Mammary epithelial cell (primary cell): ENCODE measurements at regions of chr4 and their contacts with region 1.

Region 1: DNA sequence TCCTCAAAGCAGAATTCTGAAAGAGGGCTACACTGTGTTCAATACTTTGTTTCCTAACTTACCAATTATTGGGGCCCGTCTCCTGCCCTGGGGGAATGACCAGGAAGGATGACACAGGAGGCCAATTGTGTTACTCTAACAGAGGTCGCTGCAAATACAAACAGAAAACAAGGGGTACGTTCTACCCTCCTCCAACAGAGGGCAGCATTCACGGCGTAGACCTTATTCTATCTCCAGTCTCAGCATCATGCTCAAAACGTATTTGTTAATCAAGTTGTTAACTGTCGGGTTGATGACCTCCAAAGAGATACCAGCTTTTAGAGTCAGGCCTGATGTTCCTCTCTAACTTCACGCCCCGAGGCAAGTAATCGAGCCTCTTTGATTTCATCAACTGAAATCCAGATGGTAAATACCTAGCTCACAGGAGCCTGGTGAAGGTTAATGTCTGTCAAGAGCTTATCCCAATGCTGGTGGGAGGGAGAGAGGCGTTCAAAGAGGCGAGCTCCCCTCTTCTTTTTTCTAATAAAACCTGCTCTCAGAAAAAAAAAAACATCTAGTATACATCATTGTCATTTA is 181.0 kb upstream of the KCNIP4 start:
- DNase-seq: peak; percentile 41
- H3K4me3 ChIP-seq: no peak overlapping the region
- H3K27ac ChIP-seq: no peak overlapping the region
- H3K4me1 ChIP-seq: no peaks in the 10 kb centered on the region
- H3K27me3 ChIP-seq: no peaks in the 10 kb centered on the region
- CTCF ChIP-seq: peak; percentile 80 to 82

Region 2: DNA sequence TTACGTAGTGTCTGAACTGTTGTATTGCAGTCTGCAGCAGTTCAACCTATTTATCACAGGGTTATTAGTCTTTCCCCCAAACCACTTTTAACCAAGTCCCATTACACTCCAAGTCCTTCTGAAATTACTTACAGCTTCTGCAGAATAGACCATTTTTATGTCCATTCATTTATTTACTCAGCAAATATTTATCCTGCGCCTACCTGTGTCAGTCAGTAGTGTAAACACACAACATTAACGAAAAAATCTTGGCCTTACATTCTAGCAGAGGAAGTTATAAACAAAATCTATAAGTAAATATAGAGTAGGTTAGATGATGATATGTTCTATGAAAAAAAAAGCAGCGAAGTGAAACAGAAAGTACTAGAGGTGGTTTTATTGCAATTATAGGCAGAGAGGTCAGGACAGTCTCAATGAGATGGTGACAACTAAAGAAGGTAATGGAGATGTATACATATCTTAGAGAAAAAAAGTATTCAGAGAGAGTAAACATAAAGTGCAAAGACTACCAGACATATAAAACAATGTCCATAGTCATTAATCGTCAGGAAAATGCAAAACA is 715.7 kb before region 1 on chr4:
- CTCF ChIA-PET with region 1: no interaction called
- dilution Hi-C with region 1: no loop called
- in situ Hi-C with region 1: no loop called
- intact Hi-C with region 1: no loop called
- DNase-seq: no peak
- H3K4me3 ChIP-seq: no peak overlapping the region
- H3K27ac ChIP-seq: no peak overlapping the region
- H3K4me1 ChIP-seq: no peaks in the 10 kb centered on the region
- H3K27me3 ChIP-seq: peaks cover 3% of the 10 kb centered on the region
- CTCF ChIP-seq: no peak

Region 3: GRCh38 chr4:22356987-22357596 is 227.6 kb after region 1 on chr4:
- CTCF ChIA-PET with region 1: interaction called, 19 read pairs
- dilution Hi-C with region 1: no loop called
- in situ Hi-C with region 1: no loop called
- intact Hi-C with region 1: loop called (anchors 1 kb)
- DNase-seq: peak; percentile 26
- H3K4me3 ChIP-seq: no peak overlapping the region
- H3K27ac ChIP-seq: no peak overlapping the region
- H3K4me1 ChIP-seq: no peaks in the 10 kb centered on the region
- H3K27me3 ChIP-seq: no peaks in the 10 kb centered on the region
- CTCF ChIP-seq: peak; percentile 35 to 70

Region 4: GRCh38 chr4:22363036-22363435 is 233.5 kb after region 1 on chr4:
- CTCF ChIA-PET with region 1: interaction called, 15 read pairs
- dilution Hi-C with region 1: no loop called
- in situ Hi-C with region 1: no loop called
- intact Hi-C with region 1: no loop called
- DNase-seq: peak; percentile 11
- H3K4me3 ChIP-seq: no peak overlapping the region
- H3K27ac ChIP-seq: no peak overlapping the region
- H3K4me1 ChIP-seq: peaks cover 16% of the 10 kb centered on the region
- H3K27me3 ChIP-seq: no peaks in the 10 kb centered on the region
- CTCF ChIP-seq: no peak

Region 5: GRCh38 chr4:23171976-23172375 is 1042.4 kb after region 1 on chr4:
- CTCF ChIA-PET with region 1: no interaction called
- dilution Hi-C with region 1: no loop called
- in situ Hi-C with region 1: no loop called
- intact Hi-C with region 1: no loop called
- DNase-seq: no peak
- H3K4me3 ChIP-seq: no peak overlapping the region
- H3K27ac ChIP-seq: no peak overlapping the region
- H3K4me1 ChIP-seq: no peaks in the 10 kb centered on the region
- H3K27me3 ChIP-seq: no peaks in the 10 kb centered on the region
- CTCF ChIP-seq: no peak